Astrocyte of the cerebellum (primary cell): ENCODE measurements at regions of chr3 and their contacts with region 1.

Region 1: GRCh38 chr3:135348690-135349089 is 553.6 kb downstream of the EPHB1 start:
- DNase-seq: no peak
- H3K4me3 ChIP-seq: no peak overlapping the region
- CTCF ChIP-seq: no peak

Region 2: GRCh38 chr3:135304378-135304777 is 44.3 kb before region 1 on chr3:
- in situ Hi-C with region 1: loop called (anchors 5 kb)
- DNase-seq: no peak
- H3K4me3 ChIP-seq: no peak overlapping the region
- CTCF ChIP-seq: no peak

Region 3: GRCh38 chr3:135393898-135394525 is 45.3 kb after region 1 on chr3:
- in situ Hi-C with region 1: no loop called
- DNase-seq: no peak
- H3K4me3 ChIP-seq: no peak overlapping the region
- CTCF ChIP-seq: no peak

Region 4: DNA sequence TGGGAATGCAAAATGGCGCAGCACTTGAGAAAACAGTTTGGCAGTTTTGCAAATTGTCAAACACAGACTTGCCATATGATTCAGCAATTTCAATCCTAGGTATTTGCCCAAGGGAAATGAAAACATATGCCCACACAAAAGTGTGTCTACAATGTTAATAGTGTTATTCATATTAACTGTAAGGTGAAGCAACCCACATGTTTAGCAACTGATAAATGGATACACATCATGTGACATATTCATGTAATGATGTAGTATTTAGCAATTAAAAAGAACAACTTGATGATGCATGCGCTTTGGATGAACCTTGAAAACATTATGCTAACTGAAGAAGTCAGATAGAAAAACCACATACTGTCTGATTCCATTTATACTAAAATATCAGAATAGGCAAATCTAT is 77.8 kb after region 1 on chr3:
- in situ Hi-C with region 1: no loop called
- DNase-seq: no peak
- H3K4me3 ChIP-seq: no peak overlapping the region
- CTCF ChIP-seq: no peak